ENCODE measurements at regions of chr12 and their contacts with region 1.

Region 1: GRCh38 chr12:123854918-123855317 is 92.8 kb downstream of the DNAH10 start:
- DNase-seq: peak in 1 of 2 experiments; percentile 11
- H3K4me3 ChIP-seq: no peak overlapping the region
- H3K4me3 Mint-ChIP-seq: no peak overlapping the region
- H3K27ac Mint-ChIP-seq: no peak overlapping the region
- H3K4me1 ChIP-seq: no peaks in the 10 kb centered on the region
- H3K4me1 Mint-ChIP-seq: no peaks in the 10 kb centered on the region
- H3K27me3 ChIP-seq: no peaks in the 10 kb centered on the region
- H3K27me3 Mint-ChIP-seq: peaks cover 3% of the 10 kb centered on the region
- CTCF ChIP-seq: no peak

Region 2: GRCh38 chr12:123822804-123823203 is 32.1 kb before region 1 on chr12:
- CTCF ChIA-PET with region 1: no interaction called
- POLR2A ChIA-PET with region 1: no interaction called
- intact Hi-C with region 1: loop called (anchors 2 kb)
- DNase-seq: peak in 1 of 2 experiments; percentile 22
- H3K4me3 ChIP-seq: no peak overlapping the region
- H3K4me3 Mint-ChIP-seq: no peak overlapping the region
- H3K27ac Mint-ChIP-seq: no peak overlapping the region
- H3K4me1 ChIP-seq: no peaks in the 10 kb centered on the region
- H3K4me1 Mint-ChIP-seq: peaks cover 8% of the 10 kb centered on the region
- H3K27me3 ChIP-seq: no peaks in the 10 kb centered on the region
- H3K27me3 Mint-ChIP-seq: no peaks in the 10 kb centered on the region
- CTCF ChIP-seq: no peak

Measured in Caco-2 (cell line).